GM10248 (cell line): ENCODE measurements at regions of chr1 and their contacts with region 1.

Region 1: DNA sequence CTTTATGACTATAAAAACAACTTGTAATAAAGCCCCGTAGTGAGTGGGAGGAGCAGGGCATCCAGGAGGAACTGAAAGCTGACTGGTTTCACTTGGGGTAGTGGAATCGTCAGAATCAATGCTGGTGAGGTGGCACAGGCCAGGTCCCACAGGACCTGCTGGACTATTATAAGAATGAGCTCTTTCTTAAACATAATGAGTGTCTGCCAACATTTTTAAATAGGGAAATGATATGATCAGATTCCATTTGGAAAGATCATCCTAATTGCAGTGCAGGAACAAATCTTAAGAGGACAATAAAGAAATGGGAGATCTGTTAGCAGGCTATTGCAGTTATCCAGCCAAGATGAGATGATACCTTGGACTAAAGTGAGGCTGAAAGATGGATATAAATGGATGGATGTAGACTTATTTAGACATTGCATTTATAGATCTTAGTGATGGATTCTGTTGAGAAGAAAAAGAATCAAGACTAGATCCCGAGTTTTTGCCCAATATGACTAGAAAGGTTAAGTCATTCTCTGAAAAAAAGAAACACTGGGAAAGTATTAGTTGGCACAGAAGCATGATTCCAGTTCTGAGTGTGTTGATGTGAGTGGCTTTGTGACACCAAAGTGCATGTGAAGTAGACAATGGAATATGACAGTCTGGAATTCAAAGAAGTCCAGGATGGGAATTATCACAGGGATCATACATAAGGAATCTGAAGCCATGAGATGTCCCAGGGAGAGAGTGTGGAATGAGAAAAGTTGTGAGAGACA is 153.3 kb upstream of the SGIP1 start:
- DNase-seq: peak; percentile 53
- CTCF ChIP-seq: no peak

Region 2: DNA sequence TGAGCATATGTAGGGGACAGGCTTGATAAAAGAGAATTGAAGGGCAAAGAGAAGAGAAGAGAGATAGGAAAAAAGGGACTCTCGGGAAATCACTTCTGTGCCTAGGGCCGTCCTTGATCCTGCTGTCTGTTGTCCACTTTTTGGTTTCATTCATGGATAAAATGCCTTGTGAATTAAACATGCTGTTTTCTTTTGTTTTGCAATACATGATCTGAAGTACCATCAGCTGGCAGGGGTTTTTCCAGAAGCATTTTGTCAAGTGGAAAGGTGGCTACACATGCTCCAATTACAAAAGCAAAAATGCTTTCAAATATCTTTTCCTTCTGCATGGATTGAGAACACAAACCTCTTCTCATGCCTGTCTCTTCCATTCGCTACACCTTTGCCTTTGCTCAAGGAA is 226.2 kb before region 1 on chr1:
- CTCF ChIA-PET with region 1: no interaction called
- POLR2A ChIA-PET with region 1: no interaction called
- DNase-seq: no peak
- CTCF ChIP-seq: no peak

Region 3: GRCh38 chr1:66396212-66396890 is 15.7 kb after region 1 on chr1:
- CTCF ChIA-PET with region 1: interaction called, 41 read pairs
- POLR2A ChIA-PET with region 1: interaction called, 5 read pairs
- DNase-seq: peak; percentile 30
- CTCF ChIP-seq: no peak

Region 4: DNA sequence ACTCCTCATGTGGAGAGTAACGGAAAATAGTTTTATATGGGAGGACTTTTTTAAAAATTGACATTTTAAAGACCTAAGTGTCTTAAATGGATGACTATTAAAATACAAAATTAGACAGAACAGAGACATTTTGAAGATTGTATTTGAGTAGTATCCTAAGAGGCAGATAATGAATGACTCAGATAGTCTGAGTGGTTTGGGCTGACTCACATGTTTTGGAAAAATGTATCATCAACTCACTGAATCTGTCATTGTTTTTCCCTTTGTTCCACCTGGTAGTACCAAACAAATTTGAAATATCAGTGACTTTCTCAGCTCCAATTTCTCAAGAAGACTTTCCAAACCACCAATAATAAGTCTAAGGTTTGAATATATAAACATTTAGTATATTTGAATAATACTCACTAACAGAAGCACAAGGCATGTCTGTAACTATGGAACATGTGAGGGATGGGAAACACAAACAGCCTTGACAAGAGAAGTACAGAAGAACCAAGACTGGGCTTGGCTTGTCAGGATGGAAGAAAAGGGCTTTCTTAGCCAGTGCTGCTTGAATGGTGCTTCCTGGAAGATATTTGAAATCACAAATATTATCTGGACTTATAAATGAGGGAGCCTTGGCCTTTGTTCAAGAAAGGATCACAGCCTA is 243.9 kb after region 1 on chr1:
- CTCF ChIA-PET with region 1: no interaction called
- POLR2A ChIA-PET with region 1: no interaction called
- DNase-seq: no peak
- CTCF ChIP-seq: no peak